ENCODE measurements at regions of chr3 and their contacts with region 1.

Region 1: GRCh38 chr3:177179281-177180067 is 17.8 kb downstream of the TBL1XR1 start:
- DNase-seq: no peak
- H3K4me3 ChIP-seq: no peak overlapping the region
- H3K27ac ChIP-seq: peak overlapping the region in 1 of 5 donors; percentile 10
- H3K4me1 ChIP-seq: peaks cover 13 to 95% (median 50%) of the 10 kb centered on the region in 4 donors
- H3K27me3 ChIP-seq: no peaks in the 10 kb centered on the region
- CTCF ChIP-seq: no peak
- EP300 ChIP-seq: no peak
- POLR2A ChIP-seq: no peak

Region 2: DNA sequence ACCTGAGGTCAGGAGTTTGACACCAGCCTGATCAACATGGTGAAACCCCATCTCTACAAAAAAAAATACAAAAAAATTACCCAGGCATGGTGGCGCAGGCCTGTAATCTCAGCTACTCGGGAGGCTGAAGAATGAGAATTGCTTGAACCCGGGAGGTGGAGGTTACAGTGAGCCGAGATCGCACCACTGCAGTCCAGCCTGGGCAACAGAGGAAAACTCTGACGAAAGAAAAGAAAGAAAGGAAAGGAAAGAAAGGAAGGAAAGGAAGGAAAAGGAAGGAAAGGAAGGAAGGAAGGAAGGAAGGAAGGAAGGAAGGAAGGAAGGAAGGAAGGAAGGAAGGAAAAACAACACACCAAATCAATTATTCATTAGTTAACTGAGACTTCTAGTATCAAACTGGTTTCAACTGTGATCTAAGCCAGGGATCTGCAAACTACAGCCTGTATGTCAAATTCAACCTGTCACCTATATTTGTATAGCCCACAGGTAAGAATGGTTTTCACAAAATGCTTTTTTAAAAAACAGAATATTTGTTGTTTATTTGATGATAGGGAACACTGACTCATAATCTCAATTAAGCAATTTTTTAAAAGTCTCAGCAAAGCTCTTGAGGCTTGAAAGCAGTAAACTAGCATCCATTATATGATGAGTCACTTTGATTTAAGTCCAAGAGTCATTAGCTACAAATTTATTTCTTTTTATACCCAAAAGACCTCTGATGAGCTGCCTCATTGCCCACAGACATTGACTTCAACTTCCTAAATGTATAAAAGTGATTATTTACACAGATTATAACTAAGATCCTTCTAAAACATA is 109.8 kb before region 1 on chr3:
- intact Hi-C with region 1: loop called (anchors 10 kb)
- DNase-seq: no peak
- H3K4me3 ChIP-seq: no peak overlapping the region
- H3K27ac ChIP-seq: no peak overlapping the region
- H3K4me1 ChIP-seq: peaks cover 0 to 39% (median 22%) of the 10 kb centered on the region in 4 donors
- H3K27me3 ChIP-seq: no peaks in the 10 kb centered on the region
- CTCF ChIP-seq: no peak
- EP300 ChIP-seq: no peak
- POLR2A ChIP-seq: no peak

Region 3: GRCh38 chr3:177529716-177530335 is 350.4 kb after region 1 on chr3:
- intact Hi-C with region 1: no loop called
- DNase-seq: no peak
- H3K4me3 ChIP-seq: no peak overlapping the region
- H3K27ac ChIP-seq: no peak overlapping the region
- H3K4me1 ChIP-seq: peaks cover 0 to 21% (median 8%) of the 10 kb centered on the region in 4 donors
- H3K27me3 ChIP-seq: no peaks in the 10 kb centered on the region
- CTCF ChIP-seq: no peak
- EP300 ChIP-seq: no peak
- POLR2A ChIP-seq: no peak

Measured in stomach (tissue), 19 donors.